ENCODE measurements at regions of chr9 and their contacts with region 1.

Region 1: GRCh38 chr9:37449862-37450632 is 15.2 kb downstream of the ZBTB5 start:
- DNase-seq: no peak
- ATAC-seq: no peak
- H3K4me3 ChIP-seq: no peak overlapping the region
- H3K27ac ChIP-seq: no peak overlapping the region
- H3K4me1 ChIP-seq: peaks cover 38% of the 10 kb centered on the region
- H3K27me3 ChIP-seq: no peaks in the 10 kb centered on the region
- CTCF ChIP-seq: no peak

Region 2: DNA sequence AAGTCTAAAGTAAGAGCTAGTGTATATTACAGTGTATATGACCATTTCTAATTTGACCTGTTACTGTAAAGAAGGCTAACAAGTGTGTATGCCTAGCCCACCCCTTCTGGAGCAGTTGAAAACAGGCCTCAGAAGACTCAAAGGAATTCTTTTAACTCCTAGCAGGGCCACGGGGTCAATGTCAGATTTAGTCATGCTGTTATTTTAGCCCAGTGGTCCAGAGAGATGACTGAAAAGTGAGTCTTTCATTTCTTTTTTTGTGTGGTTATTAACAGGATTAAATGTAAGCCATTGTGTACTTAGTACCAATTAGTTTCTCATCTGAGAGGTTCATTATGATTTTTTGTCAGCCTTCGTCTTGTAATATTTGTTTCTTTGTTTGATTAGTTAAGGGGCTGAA is 305.3 kb before region 1 on chr9:
- CTCF ChIA-PET with region 1: no interaction called
- POLR2A ChIA-PET with region 1: interaction called, 10 read pairs
- in situ Hi-C with region 1: no loop called
- intact Hi-C with region 1: no loop called
- DNase-seq: no peak
- ATAC-seq: peak; percentile 63
- H3K4me3 ChIP-seq: no peak overlapping the region
- H3K27ac ChIP-seq: no peak overlapping the region
- H3K4me1 ChIP-seq: peaks cover 3% of the 10 kb centered on the region; the same call in 1 of the 2 replicates
- H3K27me3 ChIP-seq: no peaks in the 10 kb centered on the region
- CTCF ChIP-seq: no peak

Measured in Panc1 (cell line).